G401 (cell line): ENCODE measurements at regions of chr16 and their contacts with region 1.

Region 1: GRCh38 chr16:57576429-57576870 is 34.0 kb downstream of the ADGRG5 start:
- DNase-seq: peak; percentile 72

Region 2: GRCh38 chr16:57500578-57501111 is 75.8 kb before region 1 on chr16:
- in situ Hi-C with region 1: loop called (anchors 10 kb)
- DNase-seq: no peak

Region 3: DNA sequence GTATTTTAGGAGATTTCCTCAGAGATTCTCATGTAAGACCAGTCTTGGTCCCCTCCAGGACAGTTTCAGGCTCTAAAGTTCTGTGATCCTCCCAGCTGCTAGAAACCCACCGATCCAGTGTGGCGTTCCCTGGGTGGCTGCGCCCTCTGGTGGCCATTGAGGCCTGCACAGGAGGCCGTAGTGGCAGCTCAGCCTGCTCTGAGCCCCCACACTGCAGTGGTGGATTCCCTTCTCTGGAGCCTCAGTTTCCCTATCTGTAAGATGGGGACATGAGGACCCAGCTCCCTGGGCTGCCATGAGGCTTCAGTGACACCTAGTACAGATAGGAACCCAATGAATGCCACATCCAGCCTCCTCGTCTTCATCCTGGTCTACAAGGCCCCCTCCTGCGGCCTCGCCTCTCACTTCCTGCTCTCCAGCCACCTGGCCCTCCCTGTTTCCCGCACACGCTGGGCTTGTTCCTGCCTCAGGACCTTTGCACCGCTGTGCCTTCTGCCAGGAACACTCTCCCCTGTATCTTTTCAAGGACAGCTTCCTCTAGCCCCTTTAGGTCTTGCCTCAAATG is 56.6 kb before region 1 on chr16:
- in situ Hi-C with region 1: no loop called
- DNase-seq: peak; percentile 78

Region 4: GRCh38 chr16:57643147-57643874 is 66.9 kb after region 1 on chr16:
- in situ Hi-C with region 1: loop called (anchors 5 kb)
- DNase-seq: no peak

Region 5: DNA sequence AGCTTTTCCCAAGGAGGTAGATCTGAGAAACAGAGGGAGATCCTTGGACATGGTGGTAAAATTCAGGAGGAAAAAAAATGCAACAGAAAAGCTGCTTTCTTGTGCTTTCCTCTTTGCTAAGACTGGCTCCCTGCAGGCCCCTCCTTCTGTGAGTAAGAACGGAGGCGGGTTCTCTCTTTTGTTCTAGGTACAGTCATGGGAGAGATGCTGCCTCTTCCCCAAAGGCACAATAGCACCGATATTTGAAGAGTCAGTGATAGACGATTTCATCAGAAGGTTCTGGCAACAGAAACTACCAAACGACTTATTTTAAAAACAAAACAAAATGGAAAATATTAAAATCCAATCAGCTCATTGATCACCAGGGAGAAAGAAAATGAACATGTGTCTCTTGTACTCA is 258.5 kb after region 1 on chr16:
- in situ Hi-C with region 1: no loop called
- DNase-seq: no peak